Activated naive CD4-positive, alpha-beta T cell treated with anti-CD3 and anti-CD28 coated beads for 36 hours (primary cell): ENCODE measurements at regions of chr11 and their contacts with region 1.

Region 1: DNA sequence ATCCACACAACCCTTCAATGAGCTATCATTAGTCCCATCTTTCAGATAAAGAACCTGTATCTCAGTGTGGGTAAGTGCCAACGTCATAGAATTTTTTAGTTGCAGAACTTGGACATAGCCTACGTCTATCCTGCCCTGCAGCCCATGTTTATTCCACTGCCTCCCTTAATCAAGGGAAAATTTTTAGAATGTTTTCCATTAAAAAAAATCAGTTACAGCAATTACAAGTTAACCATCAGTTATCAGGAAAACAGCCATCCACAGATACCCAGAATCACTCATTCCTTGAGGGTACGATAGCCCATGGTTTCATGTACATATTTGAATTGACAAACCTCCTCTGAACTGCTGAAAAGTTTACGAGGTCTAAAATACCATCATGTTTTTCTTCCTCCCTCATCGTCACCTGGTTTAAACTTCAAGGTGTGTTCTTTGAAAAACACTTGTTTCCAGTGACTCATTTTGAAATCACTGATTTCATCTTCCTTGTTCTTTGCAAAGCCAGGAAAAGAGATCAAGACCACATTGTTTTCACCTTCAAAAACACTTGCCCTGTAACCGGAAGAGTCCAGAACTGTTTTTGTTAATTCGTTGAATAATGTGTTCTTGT is 100.9 kb downstream of the FAM76B start:
- DNase-seq: no peak
- H3K4me3 Mint-ChIP-seq: no peak overlapping the region
- H3K27ac Mint-ChIP-seq: no peak overlapping the region
- H3K4me1 Mint-ChIP-seq: peaks cover 38% of the 10 kb centered on the region
- H3K27me3 Mint-ChIP-seq: no peaks in the 10 kb centered on the region

Region 2: DNA sequence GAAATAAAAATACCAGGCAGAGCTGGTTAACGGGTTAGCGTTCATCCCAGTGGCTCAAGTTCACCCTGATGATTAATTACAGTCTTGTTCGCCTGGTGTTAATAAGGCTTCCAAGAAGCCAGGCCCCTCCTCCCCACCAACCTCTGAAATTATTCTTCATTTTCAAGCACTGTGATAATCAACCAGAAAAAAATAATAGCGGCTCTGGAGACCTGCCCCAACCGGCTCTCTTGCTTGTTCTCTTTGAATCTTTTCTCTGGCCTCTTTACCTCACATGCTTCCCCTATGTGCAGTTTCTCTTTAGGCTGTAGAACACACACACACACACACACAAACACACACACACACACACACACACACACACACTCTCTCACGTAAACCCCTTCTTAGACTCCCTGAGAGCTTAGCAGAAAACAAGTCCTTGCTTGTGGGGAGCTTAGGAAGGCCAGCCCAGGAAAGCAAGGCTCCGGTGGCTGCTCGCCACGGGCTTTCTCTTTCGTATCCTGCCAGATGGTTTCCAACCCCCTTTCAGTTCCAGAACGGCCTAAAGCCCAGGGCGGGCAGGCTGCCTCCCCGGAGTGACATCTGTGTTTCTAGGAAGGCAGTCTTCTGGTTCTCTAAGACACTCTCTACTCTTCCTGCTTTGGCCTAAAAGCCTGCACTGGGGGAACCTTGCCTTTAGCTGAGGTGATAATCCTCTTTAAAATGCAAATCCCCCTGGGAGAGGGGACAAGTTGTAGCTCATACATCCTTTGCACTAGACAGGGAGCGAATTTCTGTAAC is 351.3 kb before region 1 on chr11:
- CTCF ChIA-PET with region 1: no interaction called
- intact Hi-C with region 1: loop called (anchors 2 kb)
- DNase-seq: peak; percentile 69
- H3K4me3 Mint-ChIP-seq: no peak overlapping the region
- H3K27ac Mint-ChIP-seq: no peak overlapping the region
- H3K4me1 Mint-ChIP-seq: peaks cover 4% of the 10 kb centered on the region
- H3K27me3 Mint-ChIP-seq: no peaks in the 10 kb centered on the region

Region 3: DNA sequence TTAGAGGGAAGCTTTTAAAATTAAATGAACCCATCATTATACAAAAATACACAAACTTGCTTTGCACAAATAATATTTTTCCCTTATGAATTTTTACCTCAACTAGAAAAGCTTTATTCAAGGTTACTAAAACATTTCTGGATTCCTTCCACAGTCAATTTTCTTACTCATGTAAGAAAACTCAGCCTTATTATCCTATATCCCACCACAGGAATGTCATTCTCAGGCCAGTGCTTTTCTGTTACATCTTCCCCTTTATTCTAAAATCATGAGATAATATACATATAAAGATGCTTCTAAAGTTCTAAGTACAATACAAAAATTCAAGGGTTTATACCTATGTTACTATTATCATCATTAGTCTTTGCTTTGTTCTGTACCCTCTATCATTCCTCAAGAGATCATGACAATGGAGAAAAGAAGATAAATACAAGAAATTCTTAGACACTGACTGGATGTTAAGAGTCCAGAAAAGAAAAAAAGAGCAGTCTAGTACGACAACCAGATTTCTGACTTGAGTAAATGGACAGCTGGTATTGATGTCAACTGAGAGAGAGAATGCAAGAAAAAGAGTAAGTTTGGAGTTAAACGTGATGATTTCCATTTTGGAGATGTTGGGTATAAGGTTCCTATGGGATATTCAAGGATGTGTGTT is 174.9 kb after region 1 on chr11:
- CTCF ChIA-PET with region 1: no interaction called
- intact Hi-C with region 1: no loop called
- DNase-seq: no peak
- H3K4me3 Mint-ChIP-seq: no peak overlapping the region
- H3K27ac Mint-ChIP-seq: no peak overlapping the region
- H3K4me1 Mint-ChIP-seq: no peaks in the 10 kb centered on the region
- H3K27me3 Mint-ChIP-seq: no peaks in the 10 kb centered on the region